Calu3 (cell line): ENCODE measurements at regions of chr1 and their contacts with region 1.

Region 1: GRCh38 chr1:210360852-210361477 is 32.3 kb downstream of the HHAT start:
- DNase-seq: no peak
- H3K4me3 Mint-ChIP-seq: no peak overlapping the region
- H3K27ac Mint-ChIP-seq: no peak overlapping the region
- H3K4me1 Mint-ChIP-seq: peaks cover 9% of the 10 kb centered on the region
- H3K27me3 Mint-ChIP-seq: no peaks in the 10 kb centered on the region
- CTCF ChIP-seq: peak; percentile 67

Region 2: DNA sequence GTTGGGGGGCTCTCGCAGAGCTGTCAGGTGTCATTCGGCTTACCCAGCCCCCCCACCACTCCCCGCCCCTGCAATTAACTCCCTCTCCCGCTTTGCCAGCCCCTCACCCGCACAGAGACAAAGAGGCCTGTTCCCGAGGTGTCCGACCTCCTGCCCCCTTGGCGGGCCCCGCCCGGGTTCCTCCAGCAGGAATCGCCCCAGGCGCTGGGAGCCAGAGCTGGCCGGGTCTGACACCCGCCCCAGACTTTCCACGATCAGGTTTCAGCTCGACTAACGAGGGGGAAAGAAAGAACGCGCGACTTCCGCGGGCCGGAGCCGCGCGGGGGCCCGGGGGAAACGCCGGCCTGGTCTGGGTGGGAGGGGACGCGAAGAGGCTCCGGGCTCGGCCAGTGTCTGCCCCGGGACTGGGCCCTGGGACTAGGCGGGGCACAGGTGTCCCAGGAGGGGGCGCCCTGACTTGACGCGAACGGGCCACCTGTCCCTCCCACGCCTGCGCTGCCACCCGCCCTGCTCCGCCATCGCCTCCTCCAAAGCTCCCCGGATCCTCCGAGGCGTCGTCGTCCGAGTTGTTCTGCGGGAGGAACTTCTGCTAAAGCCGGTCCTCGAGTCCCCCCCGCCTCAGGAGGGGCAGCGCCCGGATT is 68.6 kb before region 1 on chr1:
- CTCF ChIA-PET with region 1: no interaction called
- intact Hi-C with region 1: no loop called
- DNase-seq: peak; percentile 92
- H3K4me3 Mint-ChIP-seq: peak overlapping the region; percentile 72
- H3K27ac Mint-ChIP-seq: peak overlapping the region; percentile 60
- H3K4me1 Mint-ChIP-seq: peaks cover 8% of the 10 kb centered on the region
- H3K27me3 Mint-ChIP-seq: peaks cover 19% of the 10 kb centered on the region
- CTCF ChIP-seq: peak; percentile 59

Region 3: DNA sequence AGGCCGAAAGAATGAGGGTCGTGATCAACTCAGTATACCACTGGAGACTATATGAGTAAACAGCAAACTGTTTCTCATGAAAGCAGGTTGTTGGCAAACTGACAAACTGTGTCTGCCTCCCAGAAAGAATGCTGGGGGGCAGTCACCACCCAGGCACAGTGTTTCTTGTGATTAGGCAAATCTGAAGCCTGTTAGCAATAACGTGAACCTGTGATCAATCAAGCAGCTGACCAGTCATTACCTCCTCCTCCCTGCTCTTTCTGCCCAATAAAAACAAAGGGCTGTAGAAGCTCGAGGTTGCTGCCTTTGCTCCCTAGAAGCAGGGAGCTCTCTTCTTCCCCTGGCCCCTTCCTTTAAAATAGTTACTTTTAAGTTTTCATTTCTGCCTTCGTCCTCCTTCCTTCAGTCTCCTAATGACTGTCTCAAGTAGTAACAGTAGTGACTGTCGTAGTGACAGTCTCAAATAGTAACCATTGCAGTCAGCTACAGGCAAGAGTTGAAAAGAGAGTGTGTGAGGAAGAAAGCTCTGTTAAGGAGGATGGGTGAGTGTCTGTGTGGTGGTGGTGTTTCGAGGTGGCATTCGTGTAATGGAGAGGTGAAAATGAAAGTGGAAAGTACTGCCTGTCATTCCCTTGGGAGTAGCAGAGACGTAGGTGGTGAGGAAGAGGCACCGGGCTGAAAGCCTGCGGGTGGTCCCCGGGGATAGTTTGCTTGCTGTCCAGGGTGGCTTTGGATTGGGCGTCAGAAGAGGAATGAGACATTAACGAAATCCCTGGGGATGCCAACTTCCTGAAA is 17.8 kb before region 1 on chr1:
- CTCF ChIA-PET with region 1: interaction called, 11 read pairs
- intact Hi-C with region 1: no loop called
- DNase-seq: no peak
- H3K4me3 Mint-ChIP-seq: no peak overlapping the region
- H3K27ac Mint-ChIP-seq: no peak overlapping the region
- H3K4me1 Mint-ChIP-seq: no peaks in the 10 kb centered on the region
- H3K27me3 Mint-ChIP-seq: no peaks in the 10 kb centered on the region
- CTCF ChIP-seq: no peak

Region 4: DNA sequence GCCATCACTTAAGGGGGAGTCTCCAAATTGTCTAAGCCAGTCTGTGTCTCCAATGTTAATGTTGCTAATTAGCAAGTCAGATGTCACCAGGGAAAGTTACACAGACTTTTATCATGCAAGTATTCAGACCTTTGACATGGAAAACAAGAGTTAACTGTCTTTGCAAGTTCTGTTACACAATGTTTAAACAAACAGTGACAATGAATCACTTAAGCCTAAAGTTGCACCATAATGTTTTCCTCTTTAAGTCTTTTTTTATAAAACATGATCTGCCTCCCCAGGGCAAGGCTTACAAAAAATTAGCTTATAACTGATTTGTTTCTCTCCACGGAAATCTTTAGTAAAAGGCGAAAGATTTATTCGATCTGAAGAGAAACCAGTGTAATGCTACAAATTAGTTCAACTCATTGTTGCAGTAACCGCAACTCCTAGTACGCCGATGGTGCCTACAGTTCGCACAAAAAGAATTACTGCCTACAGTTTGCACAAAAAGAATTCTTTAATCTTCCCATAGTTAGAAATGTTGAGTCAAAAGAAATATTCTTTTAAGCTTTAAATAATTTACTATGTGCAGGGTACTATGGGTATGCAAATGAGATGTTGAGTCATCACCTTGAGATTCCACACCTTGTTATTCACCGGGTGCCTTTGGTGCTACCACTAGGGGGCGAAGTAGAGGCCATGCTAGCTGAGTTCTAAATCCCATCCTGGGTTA is 13.1 kb after region 1 on chr1:
- CTCF ChIA-PET with region 1: interaction called, 16 read pairs
- intact Hi-C with region 1: no loop called
- DNase-seq: peak; percentile 93
- H3K4me3 Mint-ChIP-seq: peak overlapping the region; percentile 65
- H3K27ac Mint-ChIP-seq: peak overlapping the region; percentile 96
- H3K4me1 Mint-ChIP-seq: peaks cover 21% of the 10 kb centered on the region
- H3K27me3 Mint-ChIP-seq: no peaks in the 10 kb centered on the region
- CTCF ChIP-seq: peak; percentile 83

Region 5: GRCh38 chr1:210394281-210394821 is 33.4 kb after region 1 on chr1:
- CTCF ChIA-PET with region 1: interaction called, 10 read pairs
- intact Hi-C with region 1: loop called (anchors 1 kb)
- DNase-seq: no peak
- H3K4me3 Mint-ChIP-seq: no peak overlapping the region
- H3K27ac Mint-ChIP-seq: no peak overlapping the region
- H3K4me1 Mint-ChIP-seq: peaks cover 14% of the 10 kb centered on the region
- H3K27me3 Mint-ChIP-seq: no peaks in the 10 kb centered on the region
- CTCF ChIP-seq: no peak

Region 6: GRCh38 chr1:210400043-210400840 is 39.3 kb after region 1 on chr1:
- CTCF ChIA-PET with region 1: interaction called, 10 read pairs
- intact Hi-C with region 1: loop called (anchors 1 kb)
- DNase-seq: peak; percentile 77
- H3K4me3 Mint-ChIP-seq: no peak overlapping the region
- H3K27ac Mint-ChIP-seq: no peak overlapping the region
- H3K4me1 Mint-ChIP-seq: peaks cover 8% of the 10 kb centered on the region
- H3K27me3 Mint-ChIP-seq: no peaks in the 10 kb centered on the region
- CTCF ChIP-seq: peak; percentile 82